ENCODE measurements at regions of chr14 and their contacts with region 1.

Region 1: DNA sequence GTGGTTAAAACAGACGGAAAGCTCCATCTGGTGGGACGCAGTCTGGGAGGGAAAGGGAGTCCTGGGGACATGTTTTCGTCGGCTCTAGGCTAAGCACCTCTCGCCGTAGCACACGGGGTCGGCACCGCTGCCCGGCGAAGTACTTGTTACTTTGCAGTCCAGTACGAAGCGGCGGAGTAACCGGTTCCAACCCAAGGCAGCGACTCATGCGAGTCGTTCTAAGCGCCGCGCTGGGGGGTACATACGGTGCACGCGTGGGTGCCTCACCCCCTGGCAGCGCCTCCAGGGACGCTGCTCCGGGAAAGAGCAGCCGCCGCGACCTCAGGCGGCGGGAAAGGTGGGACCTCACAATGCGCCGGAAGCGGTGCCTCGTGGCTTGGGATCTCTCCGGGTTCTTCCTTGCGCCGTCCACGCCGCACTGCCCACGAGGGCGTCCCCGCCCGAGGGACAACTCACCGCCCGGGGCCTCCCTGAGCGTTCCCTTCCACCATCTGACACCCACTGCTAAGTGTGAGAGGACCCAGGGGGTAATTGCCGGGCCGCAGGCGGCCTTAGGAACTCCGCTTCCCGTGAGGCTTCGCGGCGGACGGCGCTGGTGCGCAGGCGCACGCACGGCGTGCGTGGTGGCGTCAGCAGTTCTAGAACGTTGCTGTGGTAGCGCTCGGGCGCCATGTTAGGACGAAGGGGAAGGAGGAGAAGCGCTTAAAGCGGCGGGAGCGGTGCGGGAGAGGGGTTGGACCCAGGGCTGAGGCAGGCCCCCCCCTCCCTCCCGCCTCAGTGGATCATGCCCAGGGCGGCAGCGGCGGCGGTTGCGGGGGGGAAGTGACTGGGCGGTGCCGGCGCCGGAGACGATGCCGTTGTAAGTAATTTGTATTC is at the start of gene PAPOLA:
- DNase-seq: peak; percentile 97
- H3K4me3 ChIP-seq: peak within 1 kb of the TSS; percentile 49 to 82 (median 81)
- H3K27ac ChIP-seq: peak within 1 kb of the TSS; percentile 73
- H3K4me1 ChIP-seq: peaks cover 29% of the 10 kb centered on the region
- H3K27me3 ChIP-seq: no peaks in the 10 kb centered on the region
- CTCF ChIP-seq: peak in 1 of 2 donors; percentile 35
- POLR2A ChIP-seq: peak; percentile 75
- total RNA-seq, gene PAPOLA: 164 and 184 TPM in 2 replicates

Region 2: DNA sequence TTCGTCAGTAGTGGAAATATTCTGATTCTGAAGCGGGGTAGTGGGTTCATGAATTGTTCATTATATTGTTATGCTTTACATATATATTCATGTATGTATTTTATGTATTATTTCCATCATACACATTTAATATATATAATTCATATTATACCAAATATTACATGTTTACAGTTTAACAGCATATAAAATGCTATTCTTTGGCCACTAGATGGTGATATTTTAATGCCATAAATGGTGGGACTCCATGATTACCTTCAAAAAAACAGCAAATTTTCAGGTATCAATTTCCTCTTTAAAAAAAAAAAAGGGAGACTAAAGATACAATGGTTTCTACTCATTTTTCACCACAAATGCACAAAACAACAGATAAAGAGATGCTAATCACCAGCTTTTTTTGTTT is 205.0 kb before region 1 on chr14:
- CTCF ChIA-PET with region 1: no interaction called
- POLR2A ChIA-PET with region 1: no interaction called
- dilution Hi-C with region 1: no loop called
- intact Hi-C with region 1: loop called (anchors 2 kb)
- DNase-seq: peak; percentile 22
- H3K4me3 ChIP-seq: no peak overlapping the region
- H3K27ac ChIP-seq: no peak overlapping the region
- H3K4me1 ChIP-seq: peaks cover 8% of the 10 kb centered on the region
- H3K27me3 ChIP-seq: no peaks in the 10 kb centered on the region
- CTCF ChIP-seq: peak; percentile 15 to 25
- POLR2A ChIP-seq: no peak

Region 3: GRCh38 chr14:96362965-96363756 is 138.8 kb before region 1 on chr14 and contains the starts of genes ATG2B and GSKIP:
- CTCF ChIA-PET with region 1: no interaction called
- POLR2A ChIA-PET with region 1: no interaction called
- dilution Hi-C with region 1: no loop called
- intact Hi-C with region 1: loop called (anchors 1 kb)
- DNase-seq: peak; percentile 90
- H3K4me3 ChIP-seq: peak within 1 kb of the TSS; percentile 80 to 97 (median 95)
- H3K27ac ChIP-seq: peak within 1 kb of the TSS; percentile 82
- H3K4me1 ChIP-seq: peaks cover 23% of the 10 kb centered on the region
- H3K27me3 ChIP-seq: no peaks in the 10 kb centered on the region
- CTCF ChIP-seq: no peak
- POLR2A ChIP-seq: peak; percentile 51
- total RNA-seq, gene ATG2B: 17.8 and 18.3 TPM in 2 replicates
- total RNA-seq, gene GSKIP: 15.9 and 20.2 TPM in 2 replicates

Region 4: DNA sequence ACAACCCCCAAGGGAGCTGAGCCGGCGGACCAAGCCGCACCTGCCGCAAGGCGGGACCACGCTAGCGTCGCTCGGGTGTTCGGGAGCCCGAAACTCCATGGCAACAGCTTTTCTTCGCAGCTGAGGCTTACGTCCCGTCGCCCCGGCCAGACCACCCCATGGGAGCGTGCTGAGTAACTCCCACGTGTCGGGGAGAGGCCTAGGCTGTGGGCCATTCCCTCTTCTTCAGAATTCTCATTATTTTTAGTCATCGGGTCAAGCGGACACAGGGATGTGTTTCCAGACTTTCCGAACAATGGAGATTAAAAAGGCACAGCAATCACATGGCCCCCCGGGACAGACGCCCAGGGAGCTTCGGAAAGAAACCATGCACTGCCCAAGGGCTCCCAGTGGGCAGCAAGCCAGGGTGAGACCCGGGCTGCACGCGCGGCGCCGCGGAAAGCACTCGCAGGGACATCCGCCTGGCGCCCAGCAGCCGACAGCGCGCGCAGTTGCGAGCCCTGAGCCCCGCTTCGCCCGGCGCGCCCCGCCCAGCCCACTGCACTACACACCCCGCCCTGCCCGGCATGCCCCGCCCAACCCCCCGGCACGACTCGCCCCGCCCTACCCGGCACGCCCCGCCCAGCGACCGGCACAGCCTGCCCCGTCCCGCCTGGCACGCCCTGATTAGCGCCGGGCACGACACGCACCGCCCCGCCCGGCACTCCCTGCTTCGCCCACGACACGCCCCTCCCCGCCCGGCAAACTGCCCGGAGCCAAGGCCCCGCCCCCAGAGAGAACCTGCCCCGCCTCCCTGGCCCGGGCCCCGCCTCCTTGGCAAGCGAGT is 110.5 kb before region 1 on chr14:
- CTCF ChIA-PET with region 1: no interaction called
- POLR2A ChIA-PET with region 1: no interaction called
- dilution Hi-C with region 1: no loop called
- intact Hi-C with region 1: loop called (anchors 1 kb)
- DNase-seq: peak; percentile 96
- H3K4me3 ChIP-seq: peak overlapping the region; percentile 69 to 77 (median 70)
- H3K27ac ChIP-seq: peak overlapping the region; percentile 22
- H3K4me1 ChIP-seq: peaks cover 7% of the 10 kb centered on the region
- H3K27me3 ChIP-seq: no peaks in the 10 kb centered on the region
- CTCF ChIP-seq: no peak
- POLR2A ChIP-seq: peak; percentile 65

Region 5: GRCh38 chr14:96434040-96434787 is 67.8 kb before region 1 on chr14:
- CTCF ChIA-PET with region 1: no interaction called
- POLR2A ChIA-PET with region 1: no interaction called
- dilution Hi-C with region 1: no loop called
- intact Hi-C with region 1: no loop called
- DNase-seq: no peak
- H3K4me3 ChIP-seq: no peak overlapping the region
- H3K27ac ChIP-seq: no peak overlapping the region
- H3K4me1 ChIP-seq: no peaks in the 10 kb centered on the region
- H3K27me3 ChIP-seq: no peaks in the 10 kb centered on the region
- CTCF ChIP-seq: no peak
- POLR2A ChIP-seq: no peak

Region 6: GRCh38 chr14:96796851-96797581 is 295.0 kb after region 1 on chr14 and contains the start of gene VRK1:
- CTCF ChIA-PET with region 1: no interaction called
- POLR2A ChIA-PET with region 1: no interaction called
- dilution Hi-C with region 1: no loop called
- intact Hi-C with region 1: loop called (anchors 1 kb)
- DNase-seq: peak; percentile 98
- H3K4me3 ChIP-seq: peak within 1 kb of the TSS; percentile 38 to 93 (median 71)
- H3K27ac ChIP-seq: peak within 1 kb of the TSS; percentile 46
- H3K4me1 ChIP-seq: peaks cover 10% of the 10 kb centered on the region
- H3K27me3 ChIP-seq: no peaks in the 10 kb centered on the region
- CTCF ChIP-seq: no peak
- POLR2A ChIP-seq: peak; percentile 63
- total RNA-seq, gene VRK1: 31.7 and 35.1 TPM in 2 replicates